ENCODE measurements at regions of chr11 and their contacts with region 1.

Region 1: DNA sequence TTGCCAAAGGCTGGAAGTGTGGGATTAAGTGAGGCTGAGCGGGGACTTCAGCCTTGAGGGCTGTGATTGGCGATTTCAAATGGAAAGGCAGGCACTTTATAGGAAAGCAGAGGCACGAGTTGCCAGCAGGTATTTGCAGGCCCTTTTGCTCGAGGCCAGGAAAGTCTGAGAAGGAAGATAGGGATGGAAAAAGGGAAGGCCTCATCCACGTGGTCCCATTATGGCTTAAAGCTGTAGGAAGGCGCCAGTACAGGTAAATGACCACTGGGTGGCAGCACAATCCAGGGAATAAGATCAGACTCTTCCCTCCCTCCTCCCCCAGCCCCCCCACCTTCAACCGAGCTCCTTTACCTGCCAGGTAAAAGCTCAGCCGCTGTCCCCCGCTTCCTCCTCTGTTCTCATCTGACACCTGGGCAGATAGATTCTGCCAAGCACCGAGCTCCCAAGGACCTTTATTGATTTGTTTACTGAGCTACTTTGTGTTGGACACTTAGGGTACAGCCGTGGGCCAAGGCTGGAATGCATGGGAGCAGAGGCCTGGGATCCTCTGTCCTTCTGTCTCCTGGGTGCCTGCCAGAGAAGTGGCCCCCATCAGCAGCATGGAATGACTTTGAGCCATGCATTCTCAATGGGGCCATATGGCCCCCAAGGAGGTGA is 7.5 kb downstream of the P2RX3 start:
- DNase-seq: peak; percentile 64
- ATAC-seq: peak; percentile 81
- H3K4me3 ChIP-seq: no peak overlapping the region
- H3K27ac ChIP-seq: no peak overlapping the region
- H3K4me1 ChIP-seq: peaks cover 2% of the 10 kb centered on the region; the same call in 1 of the 2 replicates
- H3K27me3 ChIP-seq: peaks cover 9% of the 10 kb centered on the region; the same call in 1 of the 2 replicates
- CTCF ChIP-seq: peak; percentile 66
- POLR2A ChIP-seq: no peak
- RAD21 ChIP-seq: peak; percentile 80

Region 2: GRCh38 chr11:57150454-57150917 is 195.2 kb before region 1 on chr11:
- CTCF ChIA-PET with region 1: no interaction called
- POLR2A ChIA-PET with region 1: no interaction called
- dilution Hi-C with region 1: no loop called
- in situ Hi-C with region 1: no loop called
- intact Hi-C with region 1: no loop called
- DNase-seq: peak; percentile 1
- ATAC-seq: no peak
- H3K4me3 ChIP-seq: no peak overlapping the region
- H3K27ac ChIP-seq: no peak overlapping the region
- H3K4me1 ChIP-seq: no peaks in the 10 kb centered on the region
- H3K27me3 ChIP-seq: no peaks in the 10 kb centered on the region; the same call in none of the 2 replicates
- CTCF ChIP-seq: no peak
- POLR2A ChIP-seq: no peak
- RAD21 ChIP-seq: no peak

Region 3: DNA sequence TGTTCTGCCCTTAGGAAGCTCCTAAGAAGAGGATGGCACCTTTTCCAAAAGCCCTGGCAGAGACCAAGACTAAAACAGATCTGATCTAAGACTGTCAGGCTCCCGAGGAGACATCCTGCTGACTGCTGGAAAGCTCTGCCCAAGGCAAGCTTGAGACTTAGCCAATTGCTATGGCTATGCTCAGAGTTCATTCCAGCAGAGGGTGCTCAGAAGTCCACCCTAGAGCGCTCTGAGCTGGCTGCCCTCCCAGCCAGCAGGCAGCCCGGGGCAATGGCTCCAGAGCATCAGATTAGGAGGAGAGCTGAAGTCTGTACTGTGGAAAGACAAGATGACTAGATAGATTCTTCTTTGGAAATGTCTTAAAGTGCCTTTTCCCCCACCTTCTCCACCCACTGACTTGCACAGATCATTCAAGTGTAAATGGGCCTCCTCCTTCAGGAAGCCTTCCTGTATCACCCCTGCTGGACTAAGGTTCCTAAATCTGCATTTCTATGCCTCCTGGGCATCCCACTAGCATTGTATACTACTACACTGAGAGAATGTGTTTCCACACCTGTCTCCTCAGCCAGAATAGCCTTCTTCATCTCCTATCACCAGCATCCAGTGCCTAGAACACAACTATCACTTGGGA is 140.5 kb before region 1 on chr11:
- CTCF ChIA-PET with region 1: no interaction called
- POLR2A ChIA-PET with region 1: no interaction called
- dilution Hi-C with region 1: no loop called
- in situ Hi-C with region 1: no loop called
- intact Hi-C with region 1: no loop called
- DNase-seq: peak; percentile 62
- ATAC-seq: peak; percentile 93
- H3K4me3 ChIP-seq: no peak overlapping the region
- H3K27ac ChIP-seq: no peak overlapping the region
- H3K4me1 ChIP-seq: no peaks in the 10 kb centered on the region; the same call in 1 of the 2 replicates
- H3K27me3 ChIP-seq: peaks cover 44% of the 10 kb centered on the region
- CTCF ChIP-seq: peak; percentile 38
- POLR2A ChIP-seq: no peak
- RAD21 ChIP-seq: peak; percentile 33

Region 4: DNA sequence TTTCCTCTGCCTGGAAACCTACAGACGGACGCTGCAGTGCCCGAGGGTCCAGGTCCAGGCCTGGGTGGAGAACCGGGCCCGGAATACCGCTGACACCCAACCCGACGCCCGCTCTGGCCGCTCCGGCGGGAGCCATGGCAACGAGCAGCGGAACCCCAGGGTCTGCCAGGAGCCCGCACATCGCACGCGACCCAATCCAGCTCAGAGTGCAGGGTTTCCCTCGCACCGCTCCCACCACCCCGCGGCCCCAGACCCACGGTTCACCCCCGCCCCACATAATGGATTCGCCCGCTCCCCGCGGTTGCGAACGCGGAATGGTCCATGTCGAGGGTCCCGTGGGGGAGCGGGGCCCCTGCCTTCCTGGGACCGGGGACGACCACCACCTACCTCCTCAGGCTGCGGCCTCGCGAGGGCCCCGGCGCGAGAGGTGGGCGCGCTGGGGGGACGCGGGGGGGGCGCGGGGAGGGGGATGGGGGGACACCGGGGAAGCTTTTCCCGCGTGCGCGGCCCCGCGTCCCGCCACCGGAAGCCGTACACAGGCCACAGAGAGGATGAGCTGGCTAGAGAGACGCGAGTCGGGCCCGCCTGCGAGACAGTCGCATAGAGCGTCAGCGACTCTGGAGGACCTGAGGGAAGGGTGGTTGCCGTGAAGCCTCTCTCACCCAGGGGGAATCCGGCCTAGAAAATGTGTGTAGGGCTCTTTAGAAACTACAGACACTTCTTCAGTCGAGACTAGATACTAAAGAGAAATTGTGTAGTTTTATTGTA is 10.2 kb before region 1 on chr11 and contains the start of gene SSRP1:
- CTCF ChIA-PET with region 1: interaction called, 10 read pairs
- POLR2A ChIA-PET with region 1: no interaction called
- dilution Hi-C with region 1: no loop called
- in situ Hi-C with region 1: no loop called
- intact Hi-C with region 1: no loop called
- DNase-seq: peak; percentile 83
- ATAC-seq: peak; percentile 98
- H3K4me3 ChIP-seq: peak within 1 kb of the TSS; percentile 76
- H3K27ac ChIP-seq: peak within 1 kb of the TSS; percentile 77
- H3K4me1 ChIP-seq: peaks cover 8% of the 10 kb centered on the region
- H3K27me3 ChIP-seq: peaks cover 20% of the 10 kb centered on the region
- CTCF ChIP-seq: no peak
- POLR2A ChIP-seq: peak; percentile 66; the same call in 1 of the 2 replicates
- RAD21 ChIP-seq: no peak
- total RNA-seq, gene SSRP1: 144 and 146 TPM in 2 replicates

Region 5: GRCh38 chr11:57480409-57481137 is 134.9 kb after region 1 on chr11:
- CTCF ChIA-PET with region 1: interaction called, 3 read pairs
- POLR2A ChIA-PET with region 1: no interaction called
- dilution Hi-C with region 1: no loop called
- in situ Hi-C with region 1: no loop called
- intact Hi-C with region 1: loop called (anchors 2 kb)
- DNase-seq: peak; percentile 25
- ATAC-seq: peak; percentile 42; the same call in 1 of the 2 replicates
- H3K4me3 ChIP-seq: no peak overlapping the region
- H3K27ac ChIP-seq: no peak overlapping the region
- H3K4me1 ChIP-seq: no peaks in the 10 kb centered on the region
- H3K27me3 ChIP-seq: peaks cover 49% of the 10 kb centered on the region
- CTCF ChIP-seq: peak; percentile 60
- POLR2A ChIP-seq: no peak
- RAD21 ChIP-seq: peak; percentile 36

Region 6: GRCh38 chr11:57644748-57645688 is 299.3 kb after region 1 on chr11:
- CTCF ChIA-PET with region 1: interaction called, 3 read pairs
- POLR2A ChIA-PET with region 1: no interaction called
- dilution Hi-C with region 1: no loop called
- in situ Hi-C with region 1: no loop called
- intact Hi-C with region 1: loop called (anchors 1 kb)
- DNase-seq: peak; percentile 67
- ATAC-seq: peak; percentile 28; the same call in 1 of the 2 replicates
- H3K4me3 ChIP-seq: no peak overlapping the region
- H3K27ac ChIP-seq: no peak overlapping the region
- H3K4me1 ChIP-seq: peaks cover 34% of the 10 kb centered on the region
- H3K27me3 ChIP-seq: no peaks in the 10 kb centered on the region
- CTCF ChIP-seq: peak; percentile 73
- POLR2A ChIP-seq: no peak
- RAD21 ChIP-seq: peak; percentile 64